Posterior cingulate gyrus (tissue), 11 donors: ENCODE measurements at regions of chr10 and their contacts with region 1.

Region 1: DNA sequence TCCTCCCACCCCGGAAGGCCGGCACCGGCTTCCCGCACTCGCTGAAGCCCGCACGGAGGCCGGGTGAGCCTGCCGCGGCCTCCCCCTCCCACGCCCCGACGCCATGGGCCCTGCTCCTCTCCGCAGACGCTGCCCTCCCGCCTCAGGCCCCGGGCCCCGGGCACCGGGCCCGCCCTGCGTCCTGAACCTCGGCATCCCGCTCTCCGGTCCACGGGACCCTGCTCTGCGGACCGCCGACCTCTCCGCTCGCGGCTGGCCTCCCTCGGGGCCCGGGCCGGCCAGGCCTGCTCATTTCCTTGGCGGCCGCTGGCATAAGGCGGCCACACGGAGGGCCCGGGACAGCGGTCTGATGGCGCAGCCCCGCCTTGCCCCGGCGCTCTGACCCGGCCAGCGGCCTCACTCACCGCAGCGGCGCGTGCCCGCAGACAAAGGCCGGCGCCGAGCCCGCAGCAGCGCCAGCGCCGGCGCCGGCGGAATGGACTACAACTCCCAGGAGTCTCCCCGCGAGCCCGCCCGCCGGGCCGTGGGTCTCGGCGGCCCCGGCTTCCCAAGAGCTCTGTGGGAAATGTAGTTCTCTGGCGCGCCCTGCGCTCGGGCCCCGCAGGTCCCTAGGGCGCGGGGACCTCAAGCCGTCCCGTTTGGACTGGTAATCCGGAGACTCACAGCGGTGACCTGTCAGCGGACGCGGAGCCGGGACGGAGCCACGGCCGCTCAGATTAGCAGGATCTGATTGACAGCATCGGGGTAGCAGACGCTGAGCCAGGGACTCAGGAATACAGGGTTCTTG is at the start of gene ZNF32:
- DNase-seq: peak; percentile 79 to 98 (median 86)

Region 2: DNA sequence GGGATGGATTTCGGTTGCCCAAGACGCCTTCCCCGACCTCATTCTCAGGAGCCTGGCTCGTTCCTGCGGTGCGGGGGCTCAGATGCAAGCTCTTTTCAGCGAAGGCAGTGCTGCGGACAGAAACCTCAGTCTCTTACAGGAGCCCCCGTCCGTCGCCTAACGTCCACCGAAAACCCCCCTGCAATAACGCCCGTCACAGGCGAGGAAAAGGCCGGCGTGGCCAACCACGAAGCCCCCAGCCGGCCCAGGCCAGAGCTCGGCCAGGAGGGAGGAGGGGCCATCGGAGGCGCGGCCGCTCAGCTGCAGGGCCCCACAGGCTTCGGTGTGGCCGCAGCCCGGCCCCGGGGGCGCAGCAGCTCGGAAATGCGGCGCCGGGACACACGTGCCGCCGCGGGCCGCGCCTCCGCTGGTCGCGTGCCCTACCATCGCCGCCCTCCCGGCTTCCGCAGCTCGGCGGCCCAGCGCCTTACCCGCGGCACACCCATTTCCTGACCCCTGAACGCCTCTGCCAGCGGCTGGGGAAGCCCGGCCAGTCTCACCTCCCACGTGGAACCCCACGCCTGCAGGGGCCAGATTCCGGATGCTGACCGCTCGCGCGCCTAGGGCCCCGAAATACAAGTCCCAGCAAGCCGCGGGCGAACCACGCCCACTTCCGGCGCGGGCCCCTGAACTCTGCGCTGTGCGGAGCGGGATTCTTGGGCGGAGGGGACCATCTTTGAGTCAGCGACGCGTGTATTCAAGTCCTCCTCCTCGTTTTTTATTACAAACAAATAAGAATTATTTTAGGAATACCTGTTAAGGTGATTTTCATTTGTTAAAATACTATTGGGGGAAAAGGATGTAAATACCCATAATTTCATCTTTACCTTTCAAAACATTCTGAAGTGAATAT is 74.3 kb before region 1 on chr10 and contains the start of gene ZNF239:
- intact Hi-C with region 1: loop called (anchors 1 kb)
- DNase-seq: peak; percentile 85 to 98 (median 90)

Region 3: GRCh38 chr10:43606322-43607198 is 42.0 kb before region 1 on chr10 and contains the start of gene ZNF485:
- intact Hi-C with region 1: loop called (anchors 2 kb)
- DNase-seq: peak; percentile 76 to 97 (median 80)

Region 4: DNA sequence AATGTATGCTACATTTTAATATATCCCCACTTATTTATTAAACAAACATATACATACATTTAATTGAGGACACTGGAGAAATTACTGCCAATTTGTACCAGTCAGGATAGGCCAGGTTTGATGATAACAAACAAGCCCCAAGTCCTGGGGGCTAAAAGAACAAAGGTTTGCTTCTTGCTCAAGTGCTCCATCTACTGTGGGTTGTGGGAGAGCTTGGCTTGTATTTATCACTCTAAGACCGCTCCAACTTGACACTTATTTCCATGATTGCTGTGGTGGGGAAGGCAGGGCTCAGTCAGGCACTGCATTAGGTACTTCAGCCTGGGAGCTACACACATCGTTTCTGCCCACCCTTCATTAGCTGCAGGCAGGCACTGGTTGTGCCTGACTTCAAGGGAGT is 136.7 kb after region 1 on chr10:
- intact Hi-C with region 1: no loop called
- DNase-seq: no peak